ENCODE measurements at regions of chr1 and their contacts with region 1.

Region 1: GRCh38 chr1:10522322-10522860 is 47.6 kb downstream of the PEX14 start:
- DNase-seq: no peak
- ATAC-seq: no peak
- H3K4me3 ChIP-seq: no peak overlapping the region
- H3K27ac ChIP-seq: peak overlapping the region; percentile 66
- H3K4me1 ChIP-seq: peaks cover 51% of the 10 kb centered on the region
- H3K27me3 ChIP-seq: no peaks in the 10 kb centered on the region
- CTCF ChIP-seq: no peak

Region 2: DNA sequence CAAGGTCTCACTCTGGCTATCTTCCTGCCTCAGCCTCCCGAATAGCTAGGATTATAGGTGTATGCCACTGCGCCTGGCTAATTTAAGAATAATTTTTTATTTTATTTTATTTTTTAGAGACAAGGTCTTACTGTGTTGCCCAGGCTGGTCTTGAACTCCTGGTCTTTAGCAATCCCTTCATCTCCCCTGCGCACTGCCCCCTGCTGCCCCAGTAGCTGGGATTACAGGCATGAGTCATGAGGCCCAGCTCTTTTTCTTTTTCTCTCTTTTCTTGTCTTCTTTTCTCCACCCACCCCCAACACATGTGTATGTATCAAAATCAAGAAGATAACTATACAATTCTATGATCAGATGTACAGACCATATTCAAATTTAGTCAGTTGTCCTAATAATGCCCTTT is 39.6 kb after region 1 on chr1:
- CTCF ChIA-PET with region 1: no interaction called
- POLR2A ChIA-PET with region 1: no interaction called
- in situ Hi-C with region 1: no loop called
- intact Hi-C with region 1: no loop called
- DNase-seq: no peak
- ATAC-seq: no peak
- H3K4me3 ChIP-seq: no peak overlapping the region
- H3K27ac ChIP-seq: no peak overlapping the region
- H3K4me1 ChIP-seq: peaks cover 7% of the 10 kb centered on the region; the same call in 1 of the 2 replicates
- H3K27me3 ChIP-seq: no peaks in the 10 kb centered on the region
- CTCF ChIP-seq: no peak; the same call in 1 of the 2 replicates

Region 3: DNA sequence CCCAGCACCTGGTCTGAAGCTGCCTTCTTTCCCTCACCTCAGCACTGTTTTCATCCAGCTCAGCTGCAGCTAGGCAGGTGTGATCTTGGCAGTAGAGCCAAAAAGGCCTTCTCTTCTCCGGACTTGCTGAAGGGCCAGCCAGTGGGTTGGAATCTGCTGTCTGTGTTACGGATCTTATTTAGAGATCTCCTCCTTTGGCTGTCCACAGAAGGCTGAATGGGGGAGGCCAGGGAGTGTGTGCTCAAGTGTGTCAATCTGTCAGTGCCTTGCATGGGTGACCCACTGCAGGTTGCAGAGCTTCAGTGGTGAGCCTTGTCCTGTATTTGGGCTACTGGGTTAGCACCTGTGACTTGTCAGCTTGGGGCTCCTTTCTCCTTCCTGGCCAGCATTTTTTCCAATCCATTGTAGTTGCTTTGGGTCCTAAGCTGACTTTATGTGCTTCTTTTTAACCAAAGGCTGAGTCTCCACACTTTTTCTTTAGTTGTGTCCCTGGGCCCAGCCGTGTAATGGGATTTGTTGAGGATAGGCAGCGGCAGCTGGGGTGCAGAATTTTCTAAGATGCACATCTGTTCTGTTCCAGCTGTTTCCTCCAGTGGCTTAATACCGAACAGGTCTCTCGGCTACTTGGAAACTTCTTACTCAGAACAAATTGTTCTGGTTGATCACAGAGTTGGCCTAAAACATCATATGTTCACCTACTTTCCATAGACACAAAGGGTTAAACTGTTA is 79.1 kb after region 1 on chr1:
- CTCF ChIA-PET with region 1: no interaction called
- POLR2A ChIA-PET with region 1: no interaction called
- in situ Hi-C with region 1: loop called (anchors 5 kb)
- intact Hi-C with region 1: no loop called
- DNase-seq: no peak
- ATAC-seq: no peak
- H3K4me3 ChIP-seq: no peak overlapping the region
- H3K27ac ChIP-seq: no peak overlapping the region
- H3K4me1 ChIP-seq: peaks cover 6% of the 10 kb centered on the region; the same call in 1 of the 2 replicates
- H3K27me3 ChIP-seq: no peaks in the 10 kb centered on the region
- CTCF ChIP-seq: no peak

Region 4: GRCh38 chr1:11331036-11331944 is 808.9 kb after region 1 on chr1:
- CTCF ChIA-PET with region 1: no interaction called
- POLR2A ChIA-PET with region 1: no interaction called
- in situ Hi-C with region 1: no loop called
- intact Hi-C with region 1: no loop called
- DNase-seq: no peak
- ATAC-seq: no peak; the same call in 1 of the 2 replicates
- H3K4me3 ChIP-seq: no peak overlapping the region
- H3K27ac ChIP-seq: no peak overlapping the region
- H3K4me1 ChIP-seq: no peaks in the 10 kb centered on the region
- H3K27me3 ChIP-seq: no peaks in the 10 kb centered on the region
- CTCF ChIP-seq: no peak